Posterior vena cava (tissue), 2 donors: ENCODE measurements at regions of chr12 and their contacts with region 1.

Region 1: DNA sequence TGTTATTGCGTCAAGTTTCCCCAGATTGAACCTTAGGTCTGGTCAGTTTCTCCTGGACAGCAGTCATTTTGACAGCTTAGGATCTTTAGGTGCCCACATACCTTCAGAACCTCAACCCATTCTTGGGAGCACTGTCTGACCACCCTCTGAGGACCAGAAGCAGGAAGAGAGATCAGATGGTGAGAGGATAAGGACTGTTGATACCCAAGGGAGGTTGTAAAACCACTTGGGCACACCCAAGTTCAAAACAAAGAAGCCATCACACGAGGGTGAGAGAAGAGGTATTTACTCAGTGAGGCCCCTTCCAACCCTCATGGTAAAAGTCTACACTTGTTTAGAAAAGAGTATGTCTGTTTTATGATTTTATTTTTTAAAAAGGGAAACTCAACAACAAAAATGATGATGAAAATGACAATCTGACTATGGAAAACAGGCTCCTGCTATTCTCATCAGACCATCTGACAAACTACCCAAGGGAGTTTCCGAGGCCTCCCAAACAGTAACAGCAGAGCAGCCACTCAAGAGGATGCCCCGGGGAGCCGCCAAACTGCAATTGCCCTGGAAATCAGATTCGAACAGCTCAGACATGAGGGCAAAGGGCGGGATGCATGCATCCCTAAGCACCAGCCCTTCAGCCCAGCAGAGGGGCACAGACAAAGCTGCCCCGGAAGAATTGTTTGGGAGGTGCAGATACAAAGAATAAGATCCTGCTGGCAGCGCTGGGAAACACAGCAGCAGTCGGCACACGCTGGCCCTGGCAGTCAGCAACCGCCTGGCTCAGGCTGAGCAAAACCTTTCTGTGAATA is 162.6 kb upstream of the PLEKHG7 start:
- DNase-seq: no peak

Region 2: DNA sequence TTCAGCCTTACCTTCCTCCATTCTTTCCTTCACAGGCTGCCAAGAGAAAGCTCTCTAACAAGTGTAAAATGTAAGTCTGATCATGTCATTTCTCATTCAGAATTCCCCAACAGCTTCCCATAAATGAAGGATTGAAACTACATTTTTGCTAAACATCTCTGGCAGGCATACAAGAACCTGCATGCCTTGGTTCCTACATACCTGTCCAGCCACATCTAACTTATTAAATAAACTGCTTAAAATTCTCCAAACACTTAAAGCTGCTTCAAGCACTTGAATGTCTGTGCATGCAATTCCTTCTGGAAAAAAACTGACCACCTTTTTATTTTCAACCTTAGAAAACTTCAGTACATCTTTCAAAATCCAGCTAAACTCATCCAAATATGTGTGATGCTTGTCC is 1273.1 kb before region 1 on chr12:
- intact Hi-C with region 1: loop called in 1 of 2 experiments (anchors 5 kb)
- DNase-seq: no peak